ENCODE measurements at regions of chr2 and their contacts with region 1.

Region 1: GRCh38 chr2:152175458-152176325 is at the start of gene STAM2:
- DNase-seq: peak; percentile 95
- ATAC-seq: peak; percentile 96
- total RNA-seq, gene STAM2: 22.6 TPM

Region 2: DNA sequence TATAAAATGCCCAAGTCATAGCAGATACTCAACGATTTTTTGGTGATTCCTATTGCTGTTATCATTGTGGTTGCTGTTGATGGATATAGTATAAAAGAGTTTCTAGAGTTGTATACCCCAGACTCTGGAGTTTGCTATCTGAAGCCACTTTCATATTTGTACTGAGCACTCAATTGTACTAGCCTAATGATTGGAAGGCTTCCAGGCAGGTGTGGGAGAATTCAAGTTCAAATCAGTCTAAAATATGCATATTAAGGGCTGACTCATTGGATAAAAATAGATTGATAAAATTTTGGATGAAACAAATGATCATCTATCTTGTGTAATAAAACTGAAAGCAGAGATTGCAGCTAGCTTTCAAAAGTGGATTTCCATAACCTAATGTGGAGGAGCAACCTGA is 564.3 kb before region 1 on chr2:
- intact Hi-C with region 1: no loop called
- DNase-seq: no peak
- ATAC-seq: no peak

Region 3: GRCh38 chr2:152036611-152037469 is 138.9 kb before region 1 on chr2:
- intact Hi-C with region 1: loop called (anchors 10 kb)
- DNase-seq: peak; percentile 49
- ATAC-seq: peak; percentile 89

Region 4: DNA sequence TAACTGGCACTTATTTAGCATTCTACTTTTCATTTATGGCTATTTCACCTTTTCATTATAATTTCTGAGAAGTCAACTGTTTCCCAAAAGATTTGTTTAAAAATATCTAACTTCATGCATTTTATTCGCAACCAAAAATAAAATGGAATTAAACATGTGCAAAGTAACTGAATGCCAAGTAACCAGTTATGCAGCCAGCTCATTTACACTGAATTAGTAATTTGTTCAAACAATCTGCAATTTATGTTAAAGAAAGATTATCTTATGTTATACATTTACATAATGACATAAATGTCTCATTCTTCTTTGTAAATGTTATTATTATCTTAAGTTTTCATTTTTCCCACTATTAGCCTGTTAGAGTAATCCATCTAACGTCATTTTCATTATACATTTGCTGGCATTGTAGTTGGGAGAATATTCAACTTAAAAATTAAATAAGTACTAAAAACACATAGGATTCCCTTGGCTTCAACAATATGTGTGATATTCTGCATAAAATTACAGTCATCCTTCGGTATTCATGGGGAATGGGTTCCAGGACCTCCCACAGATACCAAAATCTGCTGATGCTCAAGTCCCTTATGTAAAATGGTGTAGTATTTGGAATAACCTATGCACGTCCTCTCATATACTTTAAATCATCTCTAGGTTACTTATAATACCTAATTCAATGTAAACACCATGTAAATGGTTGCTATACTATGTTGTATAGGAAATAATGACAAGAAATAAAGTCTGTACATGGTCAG is 43.6 kb after region 1 on chr2:
- intact Hi-C with region 1: no loop called
- DNase-seq: no peak
- ATAC-seq: no peak

Region 5: DNA sequence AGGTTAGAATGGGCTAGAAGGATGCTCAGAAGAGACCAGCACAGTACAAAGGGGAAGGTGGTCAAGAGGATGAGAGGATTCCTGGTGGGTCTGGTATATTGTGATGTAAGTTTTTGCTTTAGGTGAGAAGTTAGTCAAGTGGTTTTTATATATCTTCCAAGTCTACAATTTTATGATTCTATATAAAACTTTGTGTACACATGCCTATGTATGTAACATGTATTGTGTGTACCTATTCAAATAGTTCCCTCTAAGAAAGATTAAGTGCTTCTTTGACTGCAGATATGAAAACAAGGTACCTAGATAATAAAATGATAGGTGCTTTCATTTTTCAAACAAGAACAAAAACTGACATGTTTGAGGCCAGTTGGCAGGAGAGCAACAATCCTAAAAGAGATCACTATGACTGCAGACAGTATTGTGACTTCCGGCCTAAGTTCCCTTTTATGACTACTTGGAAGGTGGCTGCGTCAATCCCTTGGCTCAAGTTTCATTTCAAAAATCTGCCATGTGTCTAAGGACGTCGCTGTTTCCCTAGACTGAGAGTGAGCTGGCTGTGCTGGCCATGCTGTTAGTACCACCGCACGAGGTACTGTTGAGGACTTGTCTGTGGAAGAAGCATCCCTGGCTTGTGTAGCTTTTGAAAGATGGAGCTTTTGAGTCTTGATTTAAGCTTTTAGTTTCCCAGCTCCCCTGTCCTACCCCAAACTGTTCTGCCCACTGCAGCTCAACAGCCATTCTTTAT is 418.5 kb after region 1 on chr2:
- intact Hi-C with region 1: no loop called
- DNase-seq: no peak
- ATAC-seq: peak; percentile 80

Measured in Right ventricle myocardium superior (tissue), 1 donor.